GM12878 (cell line): ENCODE measurements at regions of chr19 and their contacts with region 1.

Region 1: GRCh38 chr19:45569619-45570421 is 14.8 kb downstream of the OPA3 start:
- DNase-seq: no peak
- ATAC-seq: peak; percentile 97
- H3K4me3 ChIP-seq: no peak overlapping the region
- H3K27ac ChIP-seq: no peak overlapping the region
- H3K4me1 ChIP-seq: peaks cover 1% of the 10 kb centered on the region; the same call in 1 of the 2 replicates
- H3K27me3 ChIP-seq: no peaks in the 10 kb centered on the region
- CTCF ChIP-seq: peak; percentile 81 to 89 (median 87); a peak in 5 of 6 replicates
- EP300 ChIP-seq: no peak
- POLR2A ChIP-seq: no peak
- RAD21 ChIP-seq: peak; percentile 82

Region 2: DNA sequence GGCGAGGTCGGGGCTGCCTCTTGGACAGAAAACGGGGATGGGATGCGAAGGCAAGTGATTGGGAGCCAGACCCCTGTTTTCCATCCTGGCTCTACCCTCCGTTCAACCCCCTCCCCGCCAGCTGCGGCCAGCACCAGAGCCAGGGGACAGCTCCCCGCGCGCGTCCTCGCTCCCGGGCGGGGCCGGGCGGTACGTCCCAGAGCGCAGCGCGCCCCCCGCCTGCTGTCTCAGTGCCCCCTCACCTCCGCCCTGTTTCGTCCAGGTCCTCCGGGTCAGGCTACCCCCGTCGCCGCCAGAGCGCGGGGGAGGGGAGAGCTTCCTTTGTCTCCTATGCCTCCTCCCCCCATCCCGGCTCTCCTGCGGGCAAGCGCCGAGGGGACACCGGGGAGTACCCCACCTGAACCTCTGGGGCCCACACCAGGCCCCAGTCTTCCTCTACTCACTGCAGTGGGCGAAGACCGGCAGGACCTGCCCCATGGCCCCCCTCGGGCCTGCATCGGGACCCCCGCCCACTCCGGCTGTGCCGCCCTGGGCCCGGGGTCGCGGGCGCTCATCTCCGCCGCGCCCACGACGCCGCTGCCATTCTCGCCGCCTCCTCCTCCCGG is 73.4 kb before region 1 on chr19:
- CTCF ChIA-PET with region 1: interaction called, 3 read pairs
- POLR2A ChIA-PET with region 1: no interaction called
- RAD21 ChIA-PET with region 1: interaction called, 3 read pairs
- SMC1A ChIA-PET with region 1: no interaction called
- in situ Hi-C with region 1: no loop called
- intact Hi-C with region 1: loop called (anchors 5 kb)
- DNase-seq: no peak
- ATAC-seq: no peak
- H3K4me3 ChIP-seq: peak overlapping the region; percentile 55; the same call in 1 of the 2 replicates
- H3K27ac ChIP-seq: no peak overlapping the region
- H3K4me1 ChIP-seq: peaks cover 22% of the 10 kb centered on the region
- H3K27me3 ChIP-seq: peaks cover 0 to 9% of the 10 kb centered on the region in 2 experiments; a peak in 3 of 4 replicates
- CTCF ChIP-seq: no peak
- EP300 ChIP-seq: no peak
- POLR2A ChIP-seq: no peak; the same call in 1 of the 2 replicates
- RAD21 ChIP-seq: no peak